PC-9 (cell line): ENCODE measurements at regions of chr17 and their contacts with region 1.

Region 1: GRCh38 chr17:44533533-44534246 is 23.6 kb upstream of the FZD2 start:
- DNase-seq: peak; percentile 58 to 85
- H3K4me3 ChIP-seq: no peak overlapping the region
- H3K27ac ChIP-seq: no peak overlapping the region
- H3K4me1 ChIP-seq: peaks cover 33% of the 10 kb centered on the region
- H3K27me3 ChIP-seq: no peaks in the 10 kb centered on the region
- CTCF ChIP-seq: peak; percentile 95

Region 2: GRCh38 chr17:44199553-44200477 is 333.9 kb before region 1 on chr17 and contains the start of gene ATXN7L3:
- CTCF ChIA-PET with region 1: no interaction called
- POLR2A ChIA-PET with region 1: interaction called, 14 read pairs
- intact Hi-C with region 1: no loop called
- DNase-seq: peak; percentile 90 to 97
- H3K4me3 ChIP-seq: peak within 1 kb of the TSS; percentile 92
- H3K27ac ChIP-seq: peak within 1 kb of the TSS; percentile 77
- H3K4me1 ChIP-seq: peaks cover 35% of the 10 kb centered on the region
- H3K27me3 ChIP-seq: no peaks in the 10 kb centered on the region
- CTCF ChIP-seq: no peak
- total RNA-seq, gene ATXN7L3: 59.3 and 87.4 TPM in 2 replicates

Region 3: DNA sequence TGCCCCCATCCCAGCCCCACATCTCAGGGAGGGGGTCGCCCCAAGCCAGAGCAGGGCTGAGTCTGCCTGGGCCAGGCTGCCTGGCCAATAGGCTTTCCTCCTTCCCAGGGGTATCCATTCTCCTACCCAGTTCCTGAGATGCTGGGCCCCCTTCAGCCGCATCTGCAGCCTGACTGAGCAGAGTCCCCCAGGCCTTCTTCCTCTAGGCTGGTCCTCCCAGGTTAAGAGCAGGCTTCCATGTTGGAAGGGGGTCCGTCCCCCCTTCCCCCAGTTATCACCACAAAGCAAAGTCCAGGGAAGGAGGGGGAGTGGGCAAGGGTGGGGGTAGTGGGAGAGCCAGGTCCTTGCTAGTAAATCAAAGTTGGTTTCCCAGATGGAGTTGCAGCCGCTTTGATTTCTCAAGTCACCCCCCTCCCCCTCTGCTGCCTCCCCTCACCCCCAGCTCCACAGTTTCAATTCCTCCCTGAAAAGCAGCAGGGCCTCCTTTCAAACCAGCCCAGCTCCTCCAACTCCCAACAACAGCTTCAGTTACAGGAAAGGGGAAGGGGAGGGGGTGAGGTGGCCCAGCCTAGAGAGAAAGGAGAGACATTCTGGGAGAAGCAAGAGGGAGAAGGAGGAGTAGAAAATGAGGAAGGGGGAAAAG is 14.1 kb after region 1 on chr17:
- CTCF ChIA-PET with region 1: interaction called, 4 read pairs
- POLR2A ChIA-PET with region 1: interaction called, 13 read pairs
- intact Hi-C with region 1: no loop called
- DNase-seq: no peak
- H3K4me3 ChIP-seq: no peak overlapping the region
- H3K27ac ChIP-seq: peak overlapping the region; percentile 76
- H3K4me1 ChIP-seq: peaks cover 67% of the 10 kb centered on the region
- H3K27me3 ChIP-seq: no peaks in the 10 kb centered on the region
- CTCF ChIP-seq: no peak

Region 4: DNA sequence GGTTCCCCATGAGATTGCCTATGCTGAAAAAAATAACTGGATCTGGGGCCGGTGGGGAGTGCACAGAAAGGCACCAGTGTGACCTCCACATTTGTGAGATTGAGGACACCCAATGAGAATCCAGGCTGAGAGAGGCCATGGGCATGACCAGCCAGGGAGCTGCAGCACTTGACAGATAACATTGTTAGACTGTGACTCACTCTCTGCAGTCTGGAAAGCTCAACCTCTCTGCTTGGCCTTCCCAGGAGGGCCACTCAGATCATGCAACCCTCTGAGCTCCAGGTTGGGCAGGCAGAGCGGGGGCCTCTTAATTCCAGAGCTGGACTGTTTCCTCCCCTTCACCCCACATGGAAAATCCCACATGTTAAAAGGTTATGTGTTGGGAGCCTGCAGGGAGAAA is 53.6 kb after region 1 on chr17:
- CTCF ChIA-PET with region 1: no interaction called
- POLR2A ChIA-PET with region 1: no interaction called
- intact Hi-C with region 1: loop called (anchors 2 kb)
- DNase-seq: peak; percentile 84 to 93
- H3K4me3 ChIP-seq: no peak overlapping the region; the same call in 1 of the 2 replicates
- H3K27ac ChIP-seq: peak overlapping the region; percentile 55
- H3K4me1 ChIP-seq: peaks cover 32% of the 10 kb centered on the region
- H3K27me3 ChIP-seq: no peaks in the 10 kb centered on the region
- CTCF ChIP-seq: no peak

Region 5: DNA sequence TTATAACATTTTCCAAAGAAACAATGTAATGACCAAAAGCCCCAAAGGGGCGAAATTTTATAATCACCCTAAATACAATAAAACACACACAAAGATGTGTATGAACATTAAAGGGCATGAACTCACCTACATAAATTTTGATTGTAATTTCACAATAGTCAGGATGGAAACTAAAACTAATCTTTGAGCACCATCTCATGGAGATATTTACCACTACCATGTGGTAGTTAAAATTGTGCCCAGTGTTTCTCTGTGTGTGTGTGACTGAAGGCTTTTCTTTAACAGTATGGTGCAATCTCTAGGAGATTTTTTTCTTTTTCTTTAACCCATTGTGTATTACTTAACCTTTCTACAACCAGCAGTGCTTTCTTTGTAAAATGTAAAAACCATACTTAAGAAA is 102.9 kb after region 1 on chr17:
- CTCF ChIA-PET with region 1: interaction called, 5 read pairs
- POLR2A ChIA-PET with region 1: interaction called, 9 read pairs
- intact Hi-C with region 1: loop called (anchors 1 kb)
- DNase-seq: peak in 1 of 2 experiments; percentile 64
- H3K4me3 ChIP-seq: no peak overlapping the region
- H3K27ac ChIP-seq: no peak overlapping the region
- H3K4me1 ChIP-seq: no peaks in the 10 kb centered on the region
- H3K27me3 ChIP-seq: no peaks in the 10 kb centered on the region
- CTCF ChIP-seq: peak; percentile 76

Region 6: DNA sequence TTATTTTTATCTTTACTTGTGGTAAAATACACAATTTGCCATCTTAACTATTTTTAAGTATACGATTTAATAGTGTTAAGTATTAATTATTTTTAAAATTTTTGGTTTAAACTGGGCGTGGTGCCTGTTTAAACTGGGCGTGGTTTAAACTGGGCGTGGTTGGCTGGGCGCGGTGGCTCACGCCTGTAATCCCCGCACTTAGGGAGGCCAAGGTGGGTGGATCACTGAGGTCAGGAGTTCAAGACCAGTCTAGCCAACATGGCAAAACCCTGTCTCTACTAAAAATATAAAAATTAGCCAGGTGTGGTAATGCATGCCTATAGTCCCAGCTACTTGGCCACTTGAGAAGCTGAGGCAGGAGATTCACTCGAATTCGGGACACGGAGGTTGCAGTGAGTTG is 159.9 kb after region 1 on chr17:
- CTCF ChIA-PET with region 1: no interaction called
- POLR2A ChIA-PET with region 1: no interaction called
- intact Hi-C with region 1: no loop called
- DNase-seq: no peak
- H3K4me3 ChIP-seq: no peak overlapping the region
- H3K27ac ChIP-seq: no peak overlapping the region
- H3K4me1 ChIP-seq: peaks cover 9% of the 10 kb centered on the region
- H3K27me3 ChIP-seq: no peaks in the 10 kb centered on the region
- CTCF ChIP-seq: no peak